Activated CD4-positive, alpha-beta T cell treated with anti-CD3 and anti-CD28 coated beads, Interleukin-2, amount 10 ng/mL, durations not matched to agents 24 days and 14 days (primary cell): ENCODE measurements at regions of chr2 and their contacts with region 1.

Region 1: DNA sequence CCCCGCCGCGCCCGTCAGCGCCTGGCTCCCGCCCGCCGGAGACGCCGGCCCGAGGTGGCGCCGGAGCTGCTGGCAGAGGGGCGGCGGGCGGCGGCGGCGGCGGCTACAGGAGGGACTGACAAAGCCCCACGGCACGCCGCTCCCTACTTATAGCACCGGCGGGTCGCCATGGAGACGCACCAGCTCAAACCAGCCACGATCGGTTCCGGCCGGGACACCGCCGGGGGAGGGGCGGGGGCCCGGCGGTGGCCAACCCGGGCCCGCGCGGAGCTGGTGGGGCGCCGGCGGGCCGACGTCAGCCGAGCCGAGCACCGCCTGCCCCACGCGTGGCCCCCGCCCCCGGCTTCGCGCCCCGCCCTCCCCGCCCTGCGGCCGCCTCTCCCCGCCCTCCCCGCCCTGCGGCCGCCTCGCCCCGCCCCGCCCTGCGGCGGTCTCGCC is at the start of gene ODC1:
- DNase-seq: peak; percentile 98
- H3K4me3 Mint-ChIP-seq: peak within 1 kb of the TSS; percentile 90
- H3K27ac Mint-ChIP-seq: peak within 1 kb of the TSS; percentile 96
- H3K4me1 Mint-ChIP-seq: peaks cover 41% of the 10 kb centered on the region
- H3K27me3 Mint-ChIP-seq: no peaks in the 10 kb centered on the region
- total RNA-seq, gene ODC1: 267 and 273 TPM in 2 replicates

Region 2: GRCh38 chr2:9843229-9844035 is 604.8 kb before region 1 on chr2 and contains the start of gene TAF1B:
- intact Hi-C with region 1: loop called (anchors 2 kb)
- DNase-seq: peak; percentile 97
- H3K4me3 Mint-ChIP-seq: peak within 1 kb of the TSS; percentile 92
- H3K27ac Mint-ChIP-seq: peak within 1 kb of the TSS; percentile 92
- H3K4me1 Mint-ChIP-seq: peaks cover 34% of the 10 kb centered on the region
- H3K27me3 Mint-ChIP-seq: no peaks in the 10 kb centered on the region
- total RNA-seq, gene TAF1B: 21.9 and 22.7 TPM in 2 replicates

Region 3: GRCh38 chr2:10302479-10303180 is 145.6 kb before region 1 on chr2 and contains the start of gene HPCAL1:
- intact Hi-C with region 1: loop called (anchors 5 kb)
- DNase-seq: peak; percentile 96
- H3K4me3 Mint-ChIP-seq: peak within 1 kb of the TSS; percentile 99
- H3K27ac Mint-ChIP-seq: peak within 1 kb of the TSS; percentile 87
- H3K4me1 Mint-ChIP-seq: peaks cover 64% of the 10 kb centered on the region
- H3K27me3 Mint-ChIP-seq: no peaks in the 10 kb centered on the region
- total RNA-seq, gene HPCAL1: 77.1 and 82.8 TPM in 2 replicates

Region 4: DNA sequence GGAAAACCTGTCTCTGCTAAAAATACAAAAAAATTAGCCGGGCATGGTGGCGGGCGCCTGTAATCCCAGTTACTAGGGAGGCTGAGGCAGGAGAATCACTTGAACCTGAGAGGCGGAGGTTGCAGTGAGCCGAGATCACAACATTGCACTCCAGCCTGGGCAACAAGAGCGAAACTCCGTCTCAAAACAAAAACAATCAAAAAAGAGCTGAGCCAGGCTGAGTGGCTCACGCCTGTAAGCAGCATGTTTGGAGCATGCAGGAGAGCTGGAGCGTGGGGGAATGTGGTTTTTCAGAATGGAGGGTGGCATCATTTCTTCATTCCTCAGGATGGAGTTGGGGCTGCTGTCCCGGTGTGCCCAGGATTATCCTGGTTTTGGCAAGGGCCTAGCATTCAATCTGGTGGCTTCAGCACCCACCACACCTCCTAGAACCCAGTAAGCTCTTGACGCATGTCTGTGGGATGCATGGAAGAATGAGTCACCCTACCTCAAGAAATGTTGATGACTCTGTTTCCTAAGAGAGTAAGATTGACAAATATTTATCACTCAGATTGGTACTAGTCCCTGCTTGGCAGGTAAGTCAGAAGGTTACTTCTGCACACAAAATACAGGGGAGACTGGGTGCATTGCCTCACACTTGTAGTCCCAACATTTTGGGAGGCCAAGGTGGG is 90.1 kb after region 1 on chr2:
- intact Hi-C with region 1: loop called (anchors 5 kb)
- DNase-seq: no peak
- H3K4me3 Mint-ChIP-seq: peak overlapping the region; percentile 15
- H3K27ac Mint-ChIP-seq: peak overlapping the region; percentile 51
- H3K4me1 Mint-ChIP-seq: peaks cover 17% of the 10 kb centered on the region
- H3K27me3 Mint-ChIP-seq: peaks cover 5% of the 10 kb centered on the region

Region 5: DNA sequence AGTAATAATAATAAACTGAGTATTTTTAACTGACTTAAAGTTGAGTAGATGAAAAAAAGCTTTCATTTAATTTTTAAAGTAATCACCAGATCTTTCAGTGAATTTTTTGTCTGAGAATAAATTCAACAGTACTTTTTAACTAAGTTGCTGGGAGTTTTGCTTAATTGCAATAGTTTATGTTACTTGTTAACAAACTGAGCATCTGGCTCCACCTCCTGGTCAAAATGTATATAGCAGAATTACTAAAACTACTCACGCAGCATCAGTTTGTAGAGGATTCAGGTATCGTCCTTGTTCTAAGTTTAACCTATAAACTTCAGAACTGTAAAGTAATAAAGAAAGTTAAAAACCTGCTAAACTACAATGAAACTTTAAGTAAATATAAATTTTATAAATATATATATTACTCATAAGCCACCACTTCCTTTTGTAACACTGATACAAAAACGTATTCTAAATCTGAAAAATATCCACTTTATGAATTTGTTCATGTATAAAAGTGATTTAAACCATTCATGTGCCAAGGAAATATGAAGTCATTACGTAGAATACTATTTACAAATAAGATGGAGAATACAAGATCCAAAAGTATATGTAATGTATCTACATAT is 220.3 kb after region 1 on chr2:
- intact Hi-C with region 1: loop called (anchors 1 kb)
- DNase-seq: peak; percentile 83
- H3K4me3 Mint-ChIP-seq: no peak overlapping the region
- H3K27ac Mint-ChIP-seq: no peak overlapping the region
- H3K4me1 Mint-ChIP-seq: peaks cover 3% of the 10 kb centered on the region
- H3K27me3 Mint-ChIP-seq: no peaks in the 10 kb centered on the region